ENCODE measurements at regions of chr1 and their contacts with region 1.

Region 1: DNA sequence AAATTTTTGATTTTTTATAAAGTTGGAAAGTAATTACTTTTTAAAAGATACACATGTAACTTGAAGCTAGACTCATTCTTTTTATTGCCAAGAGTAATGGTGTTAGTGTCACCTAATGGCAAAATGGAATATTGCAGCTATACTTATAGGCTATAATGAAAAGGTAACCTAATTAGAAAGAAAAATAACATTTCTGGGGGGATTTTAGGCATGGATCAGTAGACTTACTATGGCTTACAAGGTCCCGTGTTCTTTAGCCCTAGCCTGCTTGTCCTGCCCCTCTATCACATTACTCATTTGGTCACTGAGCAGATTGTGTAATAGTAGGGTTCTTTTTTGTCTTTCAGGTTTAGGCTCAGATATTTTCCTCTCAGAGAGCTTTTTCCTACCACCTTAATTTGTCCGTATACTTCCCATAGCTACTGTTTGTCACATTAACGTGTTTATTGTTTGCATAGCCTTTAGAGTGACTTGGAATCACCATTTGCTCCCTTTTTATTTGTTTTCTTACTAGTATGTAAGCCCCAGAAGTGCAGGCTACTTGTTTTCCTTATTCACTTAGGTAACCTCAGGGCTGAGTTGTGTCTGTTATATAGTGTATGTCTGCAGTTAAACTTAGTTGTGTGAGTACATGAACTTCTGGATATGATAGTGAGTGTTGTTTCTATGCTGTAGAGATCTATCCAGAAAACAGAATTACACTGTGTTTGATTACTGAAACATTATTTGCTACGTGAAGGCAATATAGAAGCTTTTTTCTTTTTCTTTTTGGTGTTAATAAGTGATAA is 58.7 kb downstream of the RABGAP1L start:
- DNase-seq: peak in 3 of 14 experiments; percentile 55 to 66 (median 65)
- ATAC-seq: peak; percentile 79
- H3K4me3 ChIP-seq: no peak overlapping the region
- H3K4me3 Mint-ChIP-seq: no peak overlapping the region
- H3K27ac ChIP-seq: no peak overlapping the region
- H3K27ac Mint-ChIP-seq: no peak overlapping the region
- H3K4me1 ChIP-seq: no peaks in the 10 kb centered on the region
- H3K4me1 Mint-ChIP-seq: no peaks in the 10 kb centered on the region
- H3K27me3 ChIP-seq: no peaks in the 10 kb centered on the region
- H3K27me3 Mint-ChIP-seq: no peaks in the 10 kb centered on the region
- CTCF ChIP-seq: peak; percentile 88

Region 2: GRCh38 chr1:173970252-173970651 is 247.7 kb before region 1 on chr1:
- CTCF ChIA-PET with region 1: interaction called, 4 read pairs
- POLR2A ChIA-PET with region 1: no interaction called
- intact Hi-C with region 1: loop called in 1 of 2 experiments (anchors 5 kb)
- DNase-seq: no peak
- ATAC-seq: no peak
- H3K4me3 ChIP-seq: no peak overlapping the region
- H3K4me3 Mint-ChIP-seq: no peak overlapping the region
- H3K27ac ChIP-seq: no peak overlapping the region
- H3K27ac Mint-ChIP-seq: no peak overlapping the region
- H3K4me1 ChIP-seq: no peaks in the 10 kb centered on the region
- H3K4me1 Mint-ChIP-seq: no peaks in the 10 kb centered on the region
- H3K27me3 ChIP-seq: no peaks in the 10 kb centered on the region
- H3K27me3 Mint-ChIP-seq: no peaks in the 10 kb centered on the region
- CTCF ChIP-seq: no peak

Region 3: DNA sequence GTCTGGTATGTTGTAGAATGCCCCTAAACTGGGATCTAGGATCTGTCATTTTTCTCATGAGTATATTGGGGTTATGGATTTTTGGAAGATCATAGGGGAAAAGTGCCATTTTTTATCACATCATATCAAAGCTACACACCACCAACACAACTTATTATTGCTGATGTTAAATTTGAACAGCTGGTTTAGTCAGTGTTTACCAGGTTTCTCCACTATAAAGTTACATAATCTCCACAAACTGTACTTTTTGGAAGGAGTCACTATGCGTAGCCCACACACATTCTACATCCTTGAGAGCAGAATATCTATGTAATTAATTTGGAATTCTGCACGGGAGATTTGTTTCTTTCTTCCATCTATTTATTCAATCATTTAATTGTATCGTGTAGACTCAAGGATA is 231.0 kb before region 1 on chr1:
- CTCF ChIA-PET with region 1: interaction called, 4 read pairs
- POLR2A ChIA-PET with region 1: no interaction called
- intact Hi-C with region 1: loop called in 1 of 2 experiments (anchors 10 kb)
- DNase-seq: no peak
- ATAC-seq: no peak
- H3K4me3 ChIP-seq: no peak overlapping the region
- H3K4me3 Mint-ChIP-seq: no peak overlapping the region
- H3K27ac ChIP-seq: no peak overlapping the region
- H3K27ac Mint-ChIP-seq: peak overlapping the region; percentile 65
- H3K4me1 ChIP-seq: no peaks in the 10 kb centered on the region
- H3K4me1 Mint-ChIP-seq: no peaks in the 10 kb centered on the region
- H3K27me3 ChIP-seq: no peaks in the 10 kb centered on the region
- H3K27me3 Mint-ChIP-seq: no peaks in the 10 kb centered on the region
- CTCF ChIP-seq: no peak

Region 4: DNA sequence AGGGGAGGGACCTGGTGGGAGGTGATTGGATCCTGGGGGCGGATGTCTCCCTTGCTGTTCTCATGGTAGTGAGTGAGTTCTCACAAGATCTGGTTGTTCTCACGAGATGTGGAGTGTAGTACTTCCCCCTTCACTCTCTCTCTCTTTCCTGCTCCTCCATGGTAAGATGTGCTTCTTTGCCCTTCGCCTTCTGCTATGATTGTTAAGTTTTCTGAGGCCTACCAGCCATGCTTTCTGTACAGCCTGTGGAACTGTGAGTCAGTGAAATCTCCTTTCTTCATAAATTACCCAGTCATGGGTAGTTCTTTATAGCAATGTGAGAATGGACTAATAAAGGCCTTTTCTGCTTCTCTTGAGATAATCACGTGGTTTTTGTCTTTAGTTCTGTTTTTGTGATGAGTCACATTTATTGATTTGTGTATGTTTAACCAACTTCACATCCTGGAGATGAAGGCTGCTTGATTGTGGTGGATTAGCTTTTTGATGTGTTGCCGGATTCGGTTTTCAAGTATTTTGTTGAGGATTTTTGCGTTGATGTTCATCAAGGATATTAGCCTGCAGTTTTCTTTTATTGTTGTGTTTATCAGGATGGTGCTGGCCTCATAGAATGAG is 13.2 kb before region 1 on chr1:
- CTCF ChIA-PET with region 1: interaction called, 13 read pairs
- POLR2A ChIA-PET with region 1: interaction called, 3 read pairs
- intact Hi-C with region 1: no loop called
- DNase-seq: peak in 3 of 14 experiments; percentile 49 to 61 (median 60)
- ATAC-seq: peak; percentile 68
- H3K4me3 ChIP-seq: no peak overlapping the region
- H3K4me3 Mint-ChIP-seq: peak overlapping the region; percentile 61
- H3K27ac ChIP-seq: peak overlapping the region in 1 of 2 donors; percentile 18
- H3K27ac Mint-ChIP-seq: peak overlapping the region; percentile 64
- H3K4me1 ChIP-seq: peaks cover 15% of the 10 kb centered on the region
- H3K4me1 Mint-ChIP-seq: peaks cover 70% of the 10 kb centered on the region
- H3K27me3 ChIP-seq: no peaks in the 10 kb centered on the region
- H3K27me3 Mint-ChIP-seq: no peaks in the 10 kb centered on the region
- CTCF ChIP-seq: no peak